Tibial artery (tissue), 4 donors: ENCODE measurements at regions of chr2 and their contacts with region 1.

Region 1: DNA sequence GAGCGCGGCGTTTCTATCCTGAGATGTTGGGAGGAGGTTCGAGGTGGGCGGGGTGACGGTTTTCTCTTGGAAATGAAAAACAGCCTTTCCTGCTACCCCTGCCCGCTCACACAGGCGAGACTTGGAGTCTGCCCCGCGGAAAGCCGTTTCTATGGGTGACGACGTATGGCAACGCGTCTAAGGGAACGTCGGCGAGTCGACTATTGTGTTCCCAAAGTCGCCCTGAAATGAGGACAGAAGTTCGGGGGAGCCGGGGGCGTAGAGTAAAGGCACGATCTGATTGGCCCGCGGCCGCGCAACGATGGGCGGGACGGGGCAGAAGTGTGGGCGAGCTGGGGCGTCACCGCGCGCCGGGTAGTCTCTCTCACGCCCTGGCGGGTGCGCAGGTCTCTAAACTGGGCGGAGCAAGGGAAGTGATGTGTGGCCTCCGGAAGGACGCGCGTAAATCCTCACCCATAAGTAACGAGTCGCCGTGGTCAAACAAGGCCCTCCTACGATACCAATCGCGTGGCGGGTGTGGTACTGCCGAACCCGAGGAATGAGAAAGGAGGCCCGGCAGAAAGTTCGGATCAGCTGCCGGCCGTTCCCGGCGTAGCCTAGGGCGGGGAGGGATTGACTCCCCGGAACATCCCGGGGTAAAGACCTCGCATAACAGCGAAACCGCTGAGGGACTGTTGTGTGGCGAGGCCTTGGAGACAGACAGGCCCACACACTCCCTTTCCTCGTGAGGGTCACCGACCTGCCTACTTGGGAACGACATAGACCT is 89.6 kb downstream of the FAM161A start:
- DNase-seq: peak; percentile 98 to 99
- H3K4me3 ChIP-seq: peak overlapping the region; percentile 67 to 72
- H3K27ac ChIP-seq: peak overlapping the region; percentile 95 to 96
- H3K4me1 ChIP-seq: no peaks in the 10 kb centered on the region
- H3K27me3 ChIP-seq: no peaks in the 10 kb centered on the region
- CTCF ChIP-seq: no peak

Region 2: DNA sequence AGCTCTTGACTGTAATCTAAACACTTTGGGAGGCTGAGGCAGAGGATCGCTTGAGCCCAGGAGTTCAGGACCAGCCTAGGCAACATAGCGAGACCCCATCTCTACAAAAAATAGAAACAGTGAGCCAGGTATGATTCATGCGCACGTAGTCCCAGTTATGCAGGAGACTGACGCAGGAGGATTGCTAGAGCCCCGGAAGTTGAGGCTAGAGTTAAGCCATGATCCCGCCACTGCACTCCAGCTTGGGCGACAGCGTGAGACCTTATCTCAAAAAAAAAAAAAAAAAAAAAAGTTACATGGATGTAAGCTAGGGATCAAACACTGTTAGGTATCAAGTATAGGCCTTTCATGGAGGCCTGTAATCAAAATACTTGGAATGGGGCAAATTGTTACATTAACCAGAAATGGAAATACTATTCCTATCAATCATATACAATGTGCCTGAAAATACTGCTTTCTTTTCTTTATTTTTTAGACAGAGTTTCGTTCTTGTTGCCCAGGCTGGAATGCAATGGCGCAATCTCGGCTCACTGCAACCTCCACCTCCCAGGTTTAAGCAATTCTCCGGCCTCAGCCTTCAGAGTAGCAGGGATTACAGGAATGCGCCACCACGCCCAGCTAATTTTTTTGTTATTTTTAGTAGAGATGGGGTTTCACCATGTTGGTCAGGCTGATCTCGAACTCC is 253.4 kb before region 1 on chr2:
- intact Hi-C with region 1: no loop called
- DNase-seq: no peak
- H3K4me3 ChIP-seq: no peak overlapping the region
- H3K27ac ChIP-seq: no peak overlapping the region
- H3K4me1 ChIP-seq: peaks cover 0 to 18% (median 2%) of the 10 kb centered on the region in 4 donors
- H3K27me3 ChIP-seq: no peaks in the 10 kb centered on the region
- CTCF ChIP-seq: no peak

Region 3: GRCh38 chr2:61597300-61598289 is 166.6 kb before region 1 on chr2:
- intact Hi-C with region 1: no loop called
- DNase-seq: no peak
- H3K4me3 ChIP-seq: no peak overlapping the region
- H3K27ac ChIP-seq: no peak overlapping the region
- H3K4me1 ChIP-seq: no peaks in the 10 kb centered on the region
- H3K27me3 ChIP-seq: no peaks in the 10 kb centered on the region
- CTCF ChIP-seq: no peak

Region 4: DNA sequence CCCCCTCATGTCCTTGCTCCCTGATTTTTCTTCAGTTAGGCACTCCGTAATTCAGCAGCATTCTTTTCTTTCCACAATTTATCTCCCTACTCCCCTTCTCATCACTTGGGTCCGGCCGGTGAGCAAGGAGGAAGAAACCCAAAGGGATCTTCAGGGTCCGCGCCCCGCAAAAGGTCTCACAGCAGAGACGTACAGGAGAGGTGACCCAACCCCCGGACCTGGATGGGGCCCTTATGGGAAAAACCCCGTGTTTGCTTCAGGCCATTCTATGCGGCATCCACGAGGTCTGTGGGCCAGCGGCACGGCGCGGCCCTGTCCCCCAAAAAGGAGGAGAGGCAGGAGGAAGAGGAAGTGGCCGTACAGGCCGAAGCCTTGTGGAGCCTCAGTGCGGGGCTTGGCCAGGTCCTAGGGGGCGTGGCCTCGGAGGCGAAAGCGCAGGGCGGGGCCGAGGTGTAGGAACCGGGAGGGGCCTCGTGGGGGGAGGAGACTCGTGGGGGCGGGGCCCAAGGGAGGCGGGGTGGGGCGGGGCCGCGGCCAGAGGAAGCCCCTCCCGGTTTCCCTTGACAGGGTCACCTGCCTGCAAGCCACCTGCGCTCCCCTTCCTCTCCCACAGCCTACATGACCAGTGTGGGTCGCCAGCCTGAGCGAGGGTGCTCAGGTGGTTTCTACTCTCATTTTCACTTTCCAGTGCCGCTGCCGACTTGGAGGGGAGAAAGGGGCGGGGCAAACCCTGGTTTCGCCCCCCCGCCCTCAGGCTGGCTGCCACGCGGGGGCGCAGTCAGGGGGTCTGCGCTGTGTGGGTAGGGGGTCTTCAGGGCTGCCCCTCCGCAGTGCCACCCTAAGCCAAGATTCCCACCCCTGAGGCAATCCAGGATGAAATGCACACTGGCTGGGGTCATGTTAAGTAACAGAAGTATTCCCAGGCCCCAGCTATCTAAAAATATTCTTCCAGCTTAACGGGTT is 69.6 kb before region 1 on chr2:
- intact Hi-C with region 1: loop called (anchors 5 kb)
- DNase-seq: peak; percentile 93 to 96
- H3K4me3 ChIP-seq: peak overlapping the region; percentile 81 to 94
- H3K27ac ChIP-seq: peak overlapping the region; percentile 74 to 78
- H3K4me1 ChIP-seq: peaks cover 0 to 15% (median 5%) of the 10 kb centered on the region in 4 donors
- H3K27me3 ChIP-seq: no peaks in the 10 kb centered on the region
- CTCF ChIP-seq: peak; percentile 27 to 32

Region 5: GRCh38 chr2:61834893-61835292 is 70.7 kb after region 1 on chr2:
- intact Hi-C with region 1: no loop called
- DNase-seq: no peak
- H3K4me3 ChIP-seq: no peak overlapping the region
- H3K27ac ChIP-seq: no peak overlapping the region
- H3K4me1 ChIP-seq: no peaks in the 10 kb centered on the region
- H3K27me3 ChIP-seq: no peaks in the 10 kb centered on the region
- CTCF ChIP-seq: no peak

Region 6: GRCh38 chr2:61854474-61855182 is 90.4 kb after region 1 on chr2:
- intact Hi-C with region 1: loop called (anchors 10 kb)
- DNase-seq: peak; percentile 91 to 92
- H3K4me3 ChIP-seq: peak overlapping the region; percentile 70 to 80
- H3K27ac ChIP-seq: peak overlapping the region; percentile 90 to 94
- H3K4me1 ChIP-seq: peaks cover 0 to 15% (median 10%) of the 10 kb centered on the region in 4 donors
- H3K27me3 ChIP-seq: no peaks in the 10 kb centered on the region
- CTCF ChIP-seq: no peak

Region 7: GRCh38 chr2:61888267-61889055 is 124.2 kb after region 1 on chr2 and contains the start of gene CCT4:
- intact Hi-C with region 1: loop called (anchors 5 kb)
- DNase-seq: peak; percentile 83 to 92
- H3K4me3 ChIP-seq: peak within 1 kb of the TSS; percentile 76
- H3K27ac ChIP-seq: peak within 1 kb of the TSS; percentile 90 to 93
- H3K4me1 ChIP-seq: peaks cover 0 to 24% (median 17%) of the 10 kb centered on the region in 4 donors
- H3K27me3 ChIP-seq: no peaks in the 10 kb centered on the region
- CTCF ChIP-seq: peak in 1 of 2 experiments; percentile 6

Region 8: GRCh38 chr2:63159262-63159661 is 1395.0 kb after region 1 on chr2:
- intact Hi-C with region 1: no loop called
- DNase-seq: no peak
- H3K4me3 ChIP-seq: no peak overlapping the region
- H3K27ac ChIP-seq: no peak overlapping the region
- H3K4me1 ChIP-seq: no peaks in the 10 kb centered on the region
- H3K27me3 ChIP-seq: no peaks in the 10 kb centered on the region
- CTCF ChIP-seq: no peak